PC-9 (cell line): ENCODE measurements at regions of chr17 and their contacts with region 1.

Region 1: GRCh38 chr17:73359987-73360410 is 48.2 kb upstream of the CDC42EP4 start:
- DNase-seq: peak; percentile 76 to 87
- H3K4me3 ChIP-seq: no peak overlapping the region
- H3K27ac ChIP-seq: no peak overlapping the region
- H3K4me1 ChIP-seq: peaks cover 11% of the 10 kb centered on the region
- H3K27me3 ChIP-seq: no peaks in the 10 kb centered on the region
- CTCF ChIP-seq: no peak; the same call in 1 of the 2 replicates

Region 2: DNA sequence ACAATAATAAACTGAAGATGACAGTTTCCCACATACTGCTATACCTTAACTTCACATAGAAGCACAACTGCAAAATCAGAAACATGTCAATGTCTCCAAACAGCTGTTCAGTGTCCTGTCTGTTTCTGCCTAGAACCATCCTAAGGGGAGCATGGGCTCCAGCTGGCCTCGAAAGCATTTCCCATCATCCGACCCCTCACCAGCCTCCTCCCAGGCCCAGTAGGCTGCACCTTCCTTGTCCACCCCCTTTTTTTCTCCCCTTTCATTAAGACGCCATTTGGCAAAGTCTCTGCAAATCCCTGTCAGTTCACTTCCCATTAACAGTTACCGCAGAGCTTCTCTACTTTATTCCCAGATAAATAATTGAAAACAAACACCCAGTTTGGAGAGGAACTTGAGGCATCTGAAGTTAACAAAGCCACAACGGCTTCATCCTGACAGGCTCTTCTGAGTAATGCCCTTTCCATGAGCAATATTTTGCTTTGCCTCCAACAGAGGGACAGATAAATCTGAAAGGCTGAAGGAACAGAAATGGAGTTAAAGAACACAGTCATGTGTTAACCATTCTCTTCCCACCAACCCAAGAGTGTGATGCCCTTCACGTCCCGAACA is 332.8 kb before region 1 on chr17:
- CTCF ChIA-PET with region 1: no interaction called
- POLR2A ChIA-PET with region 1: interaction called, 14 read pairs
- intact Hi-C with region 1: no loop called
- DNase-seq: no peak
- H3K4me3 ChIP-seq: no peak overlapping the region
- H3K27ac ChIP-seq: no peak overlapping the region
- H3K4me1 ChIP-seq: no peaks in the 10 kb centered on the region
- H3K27me3 ChIP-seq: no peaks in the 10 kb centered on the region
- CTCF ChIP-seq: no peak

Region 3: DNA sequence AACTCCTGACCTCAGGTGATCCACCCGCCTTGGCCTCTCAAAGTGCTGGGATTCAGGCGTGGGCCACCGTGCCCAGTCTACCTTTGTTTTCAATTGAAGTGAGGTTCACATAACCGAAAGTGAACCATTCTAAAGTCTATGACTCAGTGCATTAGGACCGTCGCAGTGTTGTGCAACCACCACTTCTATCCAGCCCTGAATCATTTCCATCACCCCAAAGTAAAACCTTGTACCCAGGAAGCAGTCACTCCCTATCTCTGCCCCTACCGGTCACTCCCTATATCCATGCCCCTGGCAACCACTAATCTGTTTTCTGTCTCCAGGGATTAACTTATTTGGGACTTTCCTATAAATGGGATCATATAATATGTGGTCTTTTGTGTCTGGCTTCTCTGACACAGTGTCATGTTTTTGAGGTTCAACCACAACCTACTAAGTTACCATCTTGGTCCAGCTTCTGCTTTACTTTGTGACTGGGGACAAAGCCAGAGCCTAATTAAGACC is 19.9 kb before region 1 on chr17:
- CTCF ChIA-PET with region 1: interaction called, 8 read pairs
- POLR2A ChIA-PET with region 1: no interaction called
- intact Hi-C with region 1: loop called (anchors 2 kb)
- DNase-seq: peak; percentile 73 to 97
- H3K4me3 ChIP-seq: no peak overlapping the region
- H3K27ac ChIP-seq: peak overlapping the region; percentile 89
- H3K4me1 ChIP-seq: peaks cover 56% of the 10 kb centered on the region
- H3K27me3 ChIP-seq: no peaks in the 10 kb centered on the region
- CTCF ChIP-seq: peak; percentile 71

Region 4: DNA sequence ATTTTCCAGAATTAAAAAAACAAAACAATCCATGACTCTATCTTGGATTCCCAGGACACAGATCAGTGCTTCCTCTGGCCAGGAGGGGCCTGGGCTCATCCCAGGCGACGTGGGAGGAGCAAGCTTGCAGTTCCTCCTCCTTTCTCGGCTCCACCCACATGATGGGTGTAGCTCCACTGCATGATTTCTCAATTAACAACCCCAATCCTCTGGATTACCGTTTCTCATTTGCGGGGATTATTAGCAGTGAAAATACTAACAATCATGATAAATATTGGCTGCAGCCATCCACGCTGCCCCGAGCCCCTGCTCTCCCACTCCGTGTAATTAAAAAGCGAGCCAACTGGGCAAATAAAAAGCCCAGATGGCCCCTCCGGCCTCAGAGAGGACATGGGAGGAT is 330.7 kb after region 1 on chr17:
- CTCF ChIA-PET with region 1: no interaction called
- POLR2A ChIA-PET with region 1: no interaction called
- intact Hi-C with region 1: no loop called
- DNase-seq: no peak
- H3K4me3 ChIP-seq: no peak overlapping the region
- H3K27ac ChIP-seq: no peak overlapping the region
- H3K4me1 ChIP-seq: no peaks in the 10 kb centered on the region
- H3K27me3 ChIP-seq: peaks cover 63% of the 10 kb centered on the region
- CTCF ChIP-seq: no peak